ENCODE measurements at regions of chr14 and their contacts with region 1.

Region 1: GRCh38 chr14:68548194-68549056 is 244.4 kb downstream of the ZFP36L1 start:
- DNase-seq: peak; percentile 70 to 97
- H3K4me3 ChIP-seq: no peak overlapping the region
- H3K27ac ChIP-seq: peak overlapping the region; percentile 96 to 98
- H3K4me1 ChIP-seq: peaks cover 30 to 72% of the 10 kb centered on the region in 2 donors
- H3K27me3 ChIP-seq: no peaks in the 10 kb centered on the region
- CTCF ChIP-seq: no peak

Region 2: DNA sequence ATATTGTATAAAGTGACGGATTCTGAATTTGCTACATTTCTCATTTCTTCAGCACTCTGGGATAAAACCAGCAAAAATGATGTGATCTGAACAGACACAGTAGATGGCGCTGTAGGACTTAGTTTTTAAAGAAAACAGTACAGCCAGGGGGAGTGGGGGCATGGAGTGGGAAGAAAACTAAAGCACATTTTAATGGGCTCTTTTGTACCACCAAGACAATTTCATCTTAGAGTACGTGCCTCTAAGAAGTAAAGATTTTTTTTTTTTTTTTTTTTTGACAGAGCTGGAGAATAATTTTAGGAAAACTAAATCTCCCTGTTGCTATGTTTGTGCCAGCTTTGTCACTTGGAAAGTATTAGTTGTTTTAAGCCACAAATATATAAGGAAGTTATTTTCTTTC is 604.5 kb before region 1 on chr14:
- intact Hi-C with region 1: loop called (anchors 5 kb)
- DNase-seq: peak; percentile 12 to 91
- H3K4me3 ChIP-seq: no peak overlapping the region
- H3K27ac ChIP-seq: peak overlapping the region; percentile 41 to 66
- H3K4me1 ChIP-seq: peaks cover 18 to 44% of the 10 kb centered on the region in 2 donors
- H3K27me3 ChIP-seq: no peaks in the 10 kb centered on the region
- CTCF ChIP-seq: peak; percentile 57 to 91 (median 79)

Region 3: GRCh38 chr14:68248481-68249255 is 299.8 kb before region 1 on chr14:
- intact Hi-C with region 1: loop called (anchors 5 kb)
- DNase-seq: no peak
- H3K4me3 ChIP-seq: no peak overlapping the region
- H3K27ac ChIP-seq: peak overlapping the region; percentile 91 to 92
- H3K4me1 ChIP-seq: peaks cover 18 to 60% of the 10 kb centered on the region in 2 donors
- H3K27me3 ChIP-seq: no peaks in the 10 kb centered on the region
- CTCF ChIP-seq: peak; percentile 52 to 66 (median 62)

Region 4: DNA sequence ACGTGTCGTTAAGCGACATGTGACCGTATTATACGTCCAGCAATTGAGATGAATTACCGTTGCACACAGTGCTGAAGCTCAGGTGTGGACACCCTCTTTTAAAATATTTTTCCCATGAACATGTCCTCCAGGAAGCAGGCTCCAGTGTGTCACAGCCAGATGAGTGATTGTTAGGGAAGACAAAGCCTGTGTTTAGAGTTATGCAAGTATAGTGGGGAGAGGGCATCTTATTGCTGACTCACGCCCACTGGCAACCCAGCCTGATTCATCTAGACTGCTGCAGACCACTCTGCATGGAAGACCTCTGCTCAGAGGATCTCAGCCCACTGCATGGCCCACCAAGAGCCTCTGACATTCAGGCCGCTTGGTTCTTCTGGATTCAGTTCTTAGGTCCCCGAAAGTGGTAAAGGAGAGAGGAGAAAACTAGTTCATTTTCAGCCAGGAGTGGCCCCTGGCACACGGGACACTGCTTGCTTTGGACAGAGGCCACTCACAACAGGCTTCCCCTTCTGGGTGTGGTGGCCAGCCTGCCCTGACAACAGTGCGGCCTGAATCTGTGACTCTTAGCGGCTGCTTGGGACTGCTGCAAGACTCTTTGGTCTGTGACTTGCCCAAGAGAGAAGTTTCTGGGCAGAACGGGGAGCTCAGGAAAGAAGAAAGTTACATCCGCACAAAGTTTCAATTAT is 21.9 kb before region 1 on chr14:
- intact Hi-C with region 1: loop called (anchors 2 kb)
- DNase-seq: peak; percentile 52 to 81
- H3K4me3 ChIP-seq: peak overlapping the region in 1 of 2 donors; percentile 14
- H3K27ac ChIP-seq: peak overlapping the region; percentile 85 to 90
- H3K4me1 ChIP-seq: peaks cover 20 to 52% of the 10 kb centered on the region in 2 donors
- H3K27me3 ChIP-seq: no peaks in the 10 kb centered on the region
- CTCF ChIP-seq: no peak

Region 5: DNA sequence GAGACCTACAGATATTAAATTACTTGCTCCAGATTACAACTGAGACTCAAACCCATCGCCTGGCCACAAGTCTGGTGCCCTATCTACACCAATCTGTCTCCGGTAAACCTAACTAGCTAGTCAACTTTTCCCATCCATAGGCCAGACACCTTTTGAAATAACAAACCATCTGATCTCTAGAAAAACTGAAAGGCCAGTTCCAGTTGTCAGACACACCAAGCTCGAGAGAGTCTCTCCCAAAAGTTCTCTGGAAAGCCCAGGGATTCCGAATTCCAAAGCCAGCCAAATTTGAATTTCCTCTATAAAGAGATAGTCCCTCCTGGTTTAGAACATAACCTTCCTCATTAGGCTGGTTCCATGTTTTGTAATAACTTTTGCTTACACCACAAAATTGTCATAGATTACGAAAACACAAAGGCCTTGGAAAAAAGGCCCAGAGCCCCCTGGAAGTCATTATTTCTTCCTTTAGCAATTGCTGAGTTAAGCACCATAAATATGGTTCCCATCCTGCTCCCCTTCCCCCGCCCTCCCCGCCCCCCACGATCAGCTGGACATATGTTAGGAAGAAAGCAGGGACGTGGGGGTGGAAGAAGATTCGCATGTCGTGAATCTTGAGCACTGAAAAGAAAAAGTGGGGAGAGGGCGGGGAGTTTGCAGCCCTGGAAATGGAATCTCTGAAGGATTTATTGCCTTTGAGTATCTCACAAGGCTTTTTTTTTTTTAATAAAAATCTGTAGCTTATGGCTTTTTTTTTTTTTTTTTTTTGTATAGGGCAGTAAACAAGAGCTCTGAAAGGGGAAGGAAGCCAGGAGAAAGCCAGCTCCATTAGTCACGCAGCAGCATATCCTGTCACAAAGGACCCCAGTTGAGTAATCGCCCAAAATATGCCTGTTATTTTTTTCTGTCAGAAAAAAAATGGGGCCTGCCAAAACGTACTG is 134.0 kb after region 1 on chr14:
- intact Hi-C with region 1: loop called (anchors 2 kb)
- DNase-seq: peak; percentile 41 to 81
- H3K4me3 ChIP-seq: no peak overlapping the region
- H3K27ac ChIP-seq: peak overlapping the region; percentile 65 to 84
- H3K4me1 ChIP-seq: peaks cover 13 to 40% of the 10 kb centered on the region in 2 donors
- H3K27me3 ChIP-seq: no peaks in the 10 kb centered on the region
- CTCF ChIP-seq: no peak

Region 6: GRCh38 chr14:68795597-68796417 is 247.4 kb after region 1 on chr14:
- intact Hi-C with region 1: loop called (anchors 2 kb)
- DNase-seq: peak in 1 of 2 donors; percentile 92
- H3K4me3 ChIP-seq: peak overlapping the region; percentile 77 to 92
- H3K27ac ChIP-seq: peak overlapping the region; percentile 100
- H3K4me1 ChIP-seq: peaks cover 0 to 10% of the 10 kb centered on the region in 2 donors
- H3K27me3 ChIP-seq: no peaks in the 10 kb centered on the region
- CTCF ChIP-seq: peak; percentile 91 to 94 (median 92)

Region 7: DNA sequence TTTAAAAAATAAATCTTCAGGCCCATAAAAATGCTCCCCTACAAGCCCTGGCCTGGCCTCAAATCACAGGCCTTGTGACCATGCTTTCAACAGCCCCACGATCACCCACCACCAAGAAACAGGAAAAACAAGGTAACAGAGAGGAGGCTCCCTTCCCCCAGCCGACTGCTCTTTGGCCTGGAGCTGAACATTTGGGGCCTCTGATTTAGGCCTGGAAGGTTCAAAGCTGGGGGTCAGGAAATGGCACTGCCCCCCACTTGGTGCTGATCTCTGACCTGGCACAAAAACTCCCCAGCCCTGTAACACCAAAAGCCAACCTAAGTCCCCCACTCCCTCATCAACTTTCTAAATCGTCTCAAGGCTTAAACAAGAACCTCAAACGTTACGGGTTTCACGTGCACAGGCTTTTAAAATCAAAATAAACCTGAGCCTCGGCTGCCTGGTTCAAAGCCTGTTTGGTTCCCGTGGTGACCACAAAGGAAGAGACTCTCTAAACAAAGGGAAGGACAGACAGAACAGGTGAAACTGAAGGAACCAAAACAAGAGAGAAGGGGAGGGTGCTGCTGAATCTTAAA is 421.7 kb after region 1 on chr14:
- intact Hi-C with region 1: no loop called
- DNase-seq: no peak
- H3K4me3 ChIP-seq: peak overlapping the region in 1 of 2 donors; percentile 78
- H3K27ac ChIP-seq: peak overlapping the region; percentile 68 to 80
- H3K4me1 ChIP-seq: peaks cover 76 to 97% of the 10 kb centered on the region in 2 donors
- H3K27me3 ChIP-seq: no peaks in the 10 kb centered on the region
- CTCF ChIP-seq: no peak

Region 8: DNA sequence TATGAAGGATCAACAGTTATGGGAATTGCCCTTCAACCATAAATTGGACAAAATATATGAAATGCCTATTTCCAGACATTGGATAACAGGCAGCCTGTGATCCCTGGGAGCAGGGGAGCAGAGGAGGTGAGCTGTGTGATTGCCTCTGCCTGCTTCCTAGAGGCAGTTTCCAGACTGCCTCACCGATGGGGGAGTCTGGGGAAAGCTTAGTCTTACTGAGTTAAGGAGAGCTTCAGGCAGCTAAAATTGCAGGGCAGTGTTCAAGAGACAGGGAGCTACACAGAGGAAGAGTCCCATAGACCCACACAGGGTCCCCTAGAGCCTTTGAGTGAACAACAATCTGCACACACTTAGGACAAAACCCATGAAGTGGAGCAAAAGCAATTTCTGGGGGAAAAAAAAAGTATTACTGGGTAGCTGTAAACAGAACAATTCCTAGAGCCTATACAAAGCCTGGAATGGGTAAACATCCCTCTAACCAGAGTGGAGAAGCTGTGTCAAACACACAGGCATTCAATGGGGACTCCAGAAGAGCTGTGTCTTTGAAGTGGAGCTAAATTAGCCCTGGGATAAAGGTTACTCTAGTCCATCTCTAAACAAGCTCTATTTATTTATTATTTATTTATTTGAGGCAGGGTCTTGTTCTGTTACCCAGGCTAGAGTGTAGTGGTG is 479.0 kb after region 1 on chr14:
- intact Hi-C with region 1: no loop called
- DNase-seq: no peak
- H3K4me3 ChIP-seq: no peak overlapping the region
- H3K27ac ChIP-seq: no peak overlapping the region
- H3K4me1 ChIP-seq: no peaks in the 10 kb centered on the region
- H3K27me3 ChIP-seq: no peaks in the 10 kb centered on the region
- CTCF ChIP-seq: no peak

Measured in ascending aorta (tissue), 2 donors.